Activated B cell treated with CpG ODN at 0.5 μM for 24 hours (primary cell): ENCODE measurements at regions of chr2 and their contacts with region 1.

Region 1: GRCh38 chr2:144357623-144358373 is 162.1 kb downstream of the ZEB2 start:
- DNase-seq: no peak
- ATAC-seq: peak; percentile 60
- H3K4me3 Mint-ChIP-seq: no peak overlapping the region
- H3K27ac Mint-ChIP-seq: peak overlapping the region; percentile 55
- H3K4me1 Mint-ChIP-seq: peaks cover 33% of the 10 kb centered on the region
- H3K27me3 Mint-ChIP-seq: no peaks in the 10 kb centered on the region
- CTCF ChIP-seq: no peak

Region 2: GRCh38 chr2:144343145-144343544 is 14.7 kb before region 1 on chr2:
- CTCF ChIA-PET with region 1: no interaction called
- POLR2A ChIA-PET with region 1: no interaction called
- intact Hi-C with region 1: no loop called
- DNase-seq: no peak
- ATAC-seq: no peak
- H3K4me3 Mint-ChIP-seq: no peak overlapping the region
- H3K27ac Mint-ChIP-seq: no peak overlapping the region
- H3K4me1 Mint-ChIP-seq: peaks cover 13% of the 10 kb centered on the region
- H3K27me3 Mint-ChIP-seq: no peaks in the 10 kb centered on the region
- CTCF ChIP-seq: no peak

Region 3: DNA sequence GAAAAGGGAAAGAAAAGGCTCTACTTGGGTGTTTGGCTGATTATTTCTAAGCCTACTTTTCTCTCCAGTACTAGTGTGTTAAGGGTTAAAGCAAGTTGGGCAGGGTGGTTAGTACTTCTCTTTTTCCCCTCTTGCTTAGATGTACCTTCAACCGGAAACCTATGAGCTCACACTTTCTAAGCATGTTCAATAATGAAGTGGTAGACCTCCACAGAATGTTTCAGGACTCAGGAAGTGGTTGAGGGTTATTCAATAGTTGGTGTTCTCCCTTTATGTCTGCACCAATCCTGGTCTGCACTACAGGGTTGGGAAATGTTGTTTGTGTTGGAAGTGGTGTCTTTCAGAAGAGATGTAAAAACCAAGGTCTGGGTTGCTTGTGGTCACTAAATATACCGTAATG is 25.1 kb after region 1 on chr2:
- CTCF ChIA-PET with region 1: no interaction called
- POLR2A ChIA-PET with region 1: no interaction called
- intact Hi-C with region 1: loop called (anchors 1 kb)
- DNase-seq: no peak
- ATAC-seq: peak; percentile 97
- H3K4me3 Mint-ChIP-seq: peak overlapping the region; percentile 50
- H3K27ac Mint-ChIP-seq: peak overlapping the region; percentile 72
- H3K4me1 Mint-ChIP-seq: peaks cover 44% of the 10 kb centered on the region
- H3K27me3 Mint-ChIP-seq: no peaks in the 10 kb centered on the region
- CTCF ChIP-seq: no peak

Region 4: DNA sequence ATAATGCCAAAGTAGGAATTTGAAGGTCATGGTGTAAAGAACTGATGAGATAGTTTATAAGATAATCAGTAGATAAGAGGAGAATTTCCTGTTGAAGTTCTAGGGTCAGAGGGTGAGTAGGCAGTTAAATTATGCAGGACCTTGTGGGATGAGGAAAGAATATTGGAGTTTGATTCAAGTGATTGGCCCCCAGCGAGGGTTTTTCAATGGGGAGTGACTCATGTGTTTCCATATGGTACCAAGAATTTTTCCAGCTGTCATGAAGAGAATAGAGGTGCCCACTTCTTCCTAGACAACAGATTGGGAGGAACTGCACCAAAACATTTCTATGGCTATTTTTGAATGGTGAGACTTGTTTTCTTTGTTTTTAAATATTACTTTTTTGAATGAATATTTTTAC is 1102.4 kb after region 1 on chr2:
- CTCF ChIA-PET with region 1: no interaction called
- POLR2A ChIA-PET with region 1: interaction called, 10 read pairs
- intact Hi-C with region 1: no loop called
- DNase-seq: no peak
- ATAC-seq: no peak
- H3K4me3 Mint-ChIP-seq: no peak overlapping the region
- H3K27ac Mint-ChIP-seq: no peak overlapping the region
- H3K4me1 Mint-ChIP-seq: no peaks in the 10 kb centered on the region
- H3K27me3 Mint-ChIP-seq: no peaks in the 10 kb centered on the region
- CTCF ChIP-seq: no peak

Region 5: DNA sequence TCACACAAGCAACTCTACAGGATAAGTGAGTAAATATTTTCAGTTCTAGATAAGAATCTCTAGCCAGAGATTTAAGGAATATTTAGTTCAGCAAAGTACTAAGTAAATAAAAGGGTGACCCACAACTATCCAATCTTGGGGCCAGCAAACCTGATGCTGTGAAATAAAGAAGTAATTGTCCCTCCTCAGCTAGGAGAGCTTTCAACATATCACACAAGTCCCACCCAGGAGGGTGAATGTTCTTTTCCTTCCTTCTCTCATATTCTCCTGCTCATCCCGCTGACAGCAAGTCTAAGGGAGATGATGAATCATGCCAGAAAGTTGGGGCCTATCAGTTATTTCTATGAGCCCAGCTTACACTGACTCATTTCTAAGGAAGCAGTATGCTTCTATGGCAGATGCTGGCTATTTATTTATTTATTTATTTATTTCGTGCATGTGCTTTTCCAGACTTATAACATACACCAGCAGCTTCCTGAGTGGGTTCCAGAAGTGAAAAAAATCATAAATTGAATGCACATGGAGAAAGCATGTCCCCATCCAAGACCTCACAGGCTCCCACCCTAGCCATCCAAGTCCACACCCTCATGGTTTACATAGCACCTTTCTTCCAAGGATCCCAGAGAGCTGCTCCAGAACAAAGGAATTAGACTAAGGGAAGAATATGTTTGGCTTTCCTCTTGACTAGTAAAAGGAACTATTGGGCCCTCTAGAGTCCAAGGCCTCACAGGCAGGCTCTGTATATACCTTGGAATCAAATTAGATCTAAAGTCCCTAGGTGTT is 1236.2 kb after region 1 on chr2:
- CTCF ChIA-PET with region 1: no interaction called
- POLR2A ChIA-PET with region 1: no interaction called
- intact Hi-C with region 1: no loop called
- DNase-seq: no peak
- ATAC-seq: no peak
- H3K4me3 Mint-ChIP-seq: peak overlapping the region; percentile 6
- H3K27ac Mint-ChIP-seq: peak overlapping the region; percentile 83
- H3K4me1 Mint-ChIP-seq: peaks cover 74% of the 10 kb centered on the region
- H3K27me3 Mint-ChIP-seq: no peaks in the 10 kb centered on the region
- CTCF ChIP-seq: no peak